ENCODE measurements at regions of chr20 and their contacts with region 1.

Region 1: DNA sequence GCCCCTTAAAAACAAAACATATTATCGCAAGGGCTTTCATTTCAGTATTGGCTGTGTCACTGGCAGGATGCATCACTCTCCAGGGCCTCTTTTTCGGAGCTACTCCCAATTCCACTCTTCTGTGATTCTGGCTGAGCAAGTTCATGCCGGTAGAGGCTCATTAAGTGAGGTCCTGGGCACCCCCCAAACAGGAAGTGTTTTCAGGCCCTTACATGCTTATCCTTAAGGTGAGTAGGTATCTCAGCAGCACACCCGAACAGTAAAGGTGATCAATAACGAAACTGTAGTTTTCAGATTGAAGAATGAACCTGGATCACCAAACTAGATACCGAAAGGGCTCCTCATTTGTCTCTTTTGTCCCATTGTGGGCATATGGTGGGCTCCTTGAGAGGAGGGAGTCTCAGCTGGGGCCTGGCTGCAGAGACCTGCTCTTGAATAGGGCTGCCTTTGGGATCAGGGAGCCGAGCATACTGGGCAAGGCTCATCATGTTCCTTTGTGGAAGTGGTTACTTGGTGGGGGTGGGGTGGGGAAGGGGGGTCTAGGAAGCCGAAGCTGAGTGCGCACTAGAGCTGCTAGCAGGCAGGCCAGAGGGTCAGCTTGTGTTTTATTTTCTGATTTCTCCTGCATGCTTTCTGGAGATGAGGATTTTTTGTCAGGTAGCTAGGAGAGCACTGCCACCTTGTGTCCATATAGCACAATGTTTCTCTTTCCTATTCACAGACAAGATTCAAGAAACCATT is 65.2 kb downstream of the CDS2 start:
- DNase-seq: no peak
- ATAC-seq: peak; percentile 82 to 85 (median 84)
- H3K4me3 ChIP-seq: no peak overlapping the region
- H3K27ac ChIP-seq: peak overlapping the region in 2 of 3 donors; percentile 32 to 82
- H3K4me1 ChIP-seq: peaks cover 0 to 36% (median 5%) of the 10 kb centered on the region in 4 donors
- H3K27me3 ChIP-seq: no peaks in the 10 kb centered on the region
- CTCF ChIP-seq: peak; percentile 70 to 90 (median 80)
- POLR2A ChIP-seq: no peak

Region 2: GRCh38 chr20:5024982-5025381 is 167.0 kb before region 1 on chr20:
- intact Hi-C with region 1: no loop called
- DNase-seq: no peak
- ATAC-seq: peak in 1 of 4 donors; percentile 18
- H3K4me3 ChIP-seq: no peak overlapping the region
- H3K27ac ChIP-seq: no peak overlapping the region
- H3K4me1 ChIP-seq: no peaks in the 10 kb centered on the region
- H3K27me3 ChIP-seq: no peaks in the 10 kb centered on the region
- CTCF ChIP-seq: no peak
- POLR2A ChIP-seq: no peak

Region 3: GRCh38 chr20:5126512-5127203 is 65.3 kb before region 1 on chr20 and contains the start of gene CDS2:
- intact Hi-C with region 1: loop called (anchors 5 kb)
- DNase-seq: peak; percentile 100
- ATAC-seq: peak; percentile 90 to 97 (median 94)
- H3K4me3 ChIP-seq: peak within 1 kb of the TSS; percentile 62 to 92 (median 90)
- H3K27ac ChIP-seq: peak within 1 kb of the TSS; percentile 87 to 95 (median 92)
- H3K4me1 ChIP-seq: peaks cover 0 to 13% (median 7%) of the 10 kb centered on the region in 4 donors
- H3K27me3 ChIP-seq: no peaks in the 10 kb centered on the region
- CTCF ChIP-seq: peak; percentile 66 to 73 (median 67)
- POLR2A ChIP-seq: peak; percentile 90
- total RNA-seq, gene CDS2: 13.7 to 42.3 (median 31.6) TPM